WTC11 (cell line): ENCODE measurements at regions of chr5 and their contacts with region 1.

Region 1: DNA sequence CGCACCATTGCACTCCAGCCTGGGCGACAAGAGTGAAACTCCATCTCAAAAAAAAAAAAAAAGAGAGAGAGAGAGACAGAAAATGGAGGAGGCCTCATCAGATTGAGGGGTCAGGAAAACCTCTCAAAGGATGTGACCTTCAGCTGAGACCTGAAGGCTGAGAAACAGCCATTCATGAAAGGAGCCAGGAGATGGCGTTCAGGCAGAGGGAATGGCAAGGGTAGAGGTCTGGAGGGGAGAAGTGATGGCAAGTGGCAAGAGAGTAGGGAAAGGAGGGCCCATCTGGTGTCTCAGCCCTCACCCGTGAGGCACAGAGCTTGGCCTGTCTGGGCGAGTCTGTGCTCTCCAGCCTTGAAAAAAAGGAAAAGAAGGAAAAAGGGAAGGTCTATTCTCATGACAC is 17.0 kb downstream of the CAMK2A start:
- DNase-seq: peak; percentile 56
- ATAC-seq: peak; percentile 93
- H3K4me3 Mint-ChIP-seq: no peak overlapping the region
- H3K27ac Mint-ChIP-seq: no peak overlapping the region
- H3K4me1 Mint-ChIP-seq: peaks cover 10% of the 10 kb centered on the region
- H3K27me3 Mint-ChIP-seq: no peaks in the 10 kb centered on the region
- CTCF ChIP-seq: no peak

Region 2: DNA sequence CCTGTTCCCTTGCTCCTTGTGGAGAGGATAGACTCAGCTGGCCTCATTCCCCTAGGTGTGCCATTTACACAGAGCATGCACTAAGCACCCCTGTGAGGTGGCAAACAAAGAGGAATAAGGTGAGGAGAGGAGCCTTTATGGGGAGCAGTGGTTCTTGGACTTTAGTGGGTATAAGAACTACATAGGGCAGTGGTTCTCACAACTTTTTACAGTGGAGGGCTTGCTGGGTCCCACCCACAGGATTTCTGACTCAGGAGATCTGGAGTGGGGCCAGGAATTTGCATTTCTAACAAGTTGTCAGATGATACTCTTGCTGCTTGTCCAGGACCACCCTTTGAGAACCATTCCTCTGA is 228.2 kb before region 1 on chr5:
- CTCF ChIA-PET with region 1: no interaction called
- POLR2A ChIA-PET with region 1: no interaction called
- DNase-seq: no peak
- ATAC-seq: no peak
- H3K4me3 Mint-ChIP-seq: no peak overlapping the region
- H3K27ac Mint-ChIP-seq: no peak overlapping the region
- H3K4me1 Mint-ChIP-seq: peaks cover 5% of the 10 kb centered on the region
- H3K27me3 Mint-ChIP-seq: no peaks in the 10 kb centered on the region
- CTCF ChIP-seq: no peak

Region 3: DNA sequence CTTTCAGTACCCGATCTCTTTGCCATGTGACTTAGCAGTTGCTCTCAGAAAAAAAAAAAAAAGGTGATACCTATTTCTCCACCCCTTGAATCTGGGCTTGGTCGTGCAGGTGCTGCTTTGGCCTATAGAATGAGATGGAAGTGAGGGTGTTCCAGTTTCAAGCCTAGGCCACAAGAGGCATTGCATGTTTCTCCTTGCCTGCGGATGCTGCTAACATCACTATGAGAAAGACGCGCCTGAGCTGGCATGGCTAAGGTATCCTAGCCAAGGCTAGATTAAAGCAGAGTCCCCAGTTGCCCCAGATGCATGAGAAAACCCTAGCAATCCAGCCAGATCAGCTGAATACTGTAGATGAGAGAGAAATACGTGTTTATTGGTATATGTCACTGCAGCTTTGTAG is 171.5 kb before region 1 on chr5:
- CTCF ChIA-PET with region 1: no interaction called
- POLR2A ChIA-PET with region 1: no interaction called
- DNase-seq: no peak
- ATAC-seq: peak; percentile 81
- H3K4me3 Mint-ChIP-seq: no peak overlapping the region
- H3K27ac Mint-ChIP-seq: no peak overlapping the region
- H3K4me1 Mint-ChIP-seq: no peaks in the 10 kb centered on the region
- H3K27me3 Mint-ChIP-seq: peaks cover 2% of the 10 kb centered on the region; the same call in 1 of the 2 replicates
- CTCF ChIP-seq: no peak

Region 4: DNA sequence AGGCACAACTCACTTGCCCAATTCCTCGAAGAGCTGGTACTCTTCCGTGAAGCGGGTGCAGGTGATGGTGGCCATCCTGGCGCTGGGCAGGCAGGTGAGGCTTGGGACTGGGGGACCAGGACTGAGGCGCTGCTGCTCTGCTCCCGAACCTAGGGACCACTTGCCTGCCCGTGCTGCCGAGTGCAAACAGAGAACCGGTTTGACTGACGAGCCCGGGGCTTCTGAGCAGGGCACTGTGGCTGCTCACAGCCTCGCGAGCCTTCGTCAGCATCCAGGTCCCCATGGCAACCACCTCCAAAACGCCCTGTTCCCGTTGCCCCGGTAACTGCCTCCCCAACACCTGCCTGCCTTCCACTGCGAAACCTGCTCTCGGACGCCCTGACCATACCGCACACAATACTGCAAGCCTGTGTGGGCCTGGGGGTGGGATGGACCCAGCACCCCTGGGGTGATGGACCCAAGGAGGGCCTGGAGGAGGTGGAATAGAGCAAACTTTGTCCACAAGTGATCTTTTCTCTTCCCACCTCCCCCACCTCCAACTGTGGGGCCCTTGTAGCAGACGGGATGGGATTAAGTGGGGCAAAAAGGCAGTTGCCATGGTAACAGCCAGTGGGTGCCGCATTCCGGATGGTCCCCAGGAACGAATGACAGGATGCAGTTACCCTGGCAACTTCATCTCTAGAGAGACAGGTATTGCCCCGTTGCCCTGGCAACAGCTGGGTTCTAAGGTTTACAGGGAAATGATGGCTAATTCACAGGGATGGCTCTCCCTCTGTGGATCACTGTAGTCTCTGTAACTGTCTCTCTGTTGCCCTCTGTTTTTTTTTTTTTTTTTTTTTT is 17.2 kb after region 1 on chr5 and contains the start of gene CAMK2A:
- CTCF ChIA-PET with region 1: interaction called, 13 read pairs
- POLR2A ChIA-PET with region 1: no interaction called
- DNase-seq: peak; percentile 75
- ATAC-seq: peak; percentile 36
- H3K4me3 Mint-ChIP-seq: no peak within 1 kb of the TSS
- H3K27ac Mint-ChIP-seq: no peak within 1 kb of the TSS
- H3K4me1 Mint-ChIP-seq: peaks cover 9% of the 10 kb centered on the region
- H3K27me3 Mint-ChIP-seq: no peaks in the 10 kb centered on the region; the same call in 1 of the 2 replicates
- CTCF ChIP-seq: no peak
- total RNA-seq, gene CAMK2A: 0.13 to 0.16 TPM (median 0.14 TPM) in 3 replicates

Region 5: GRCh38 chr5:150357326-150358260 is 85.1 kb after region 1 on chr5 and contains the start of gene TCOF1:
- CTCF ChIA-PET with region 1: interaction called, 71 read pairs
- POLR2A ChIA-PET with region 1: no interaction called
- DNase-seq: peak; percentile 99
- ATAC-seq: peak; percentile 95
- H3K4me3 Mint-ChIP-seq: peak within 1 kb of the TSS; percentile 91
- H3K27ac Mint-ChIP-seq: peak within 1 kb of the TSS; percentile 83
- H3K4me1 Mint-ChIP-seq: peaks cover 17% of the 10 kb centered on the region
- H3K27me3 Mint-ChIP-seq: peaks cover 4% of the 10 kb centered on the region; the same call in 1 of the 2 replicates
- CTCF ChIP-seq: no peak
- total RNA-seq, gene TCOF1: 130 to 174 TPM (median 133 TPM) in 3 replicates